Activated CD4-positive, alpha-beta T cell treated with anti-CD3 and anti-CD28 coated beads, Interleukin-2, amount 10 ng/mL, durations not matched to agents 24 days and 14 days (primary cell): ENCODE measurements at regions of chr1 and their contacts with region 1.

Region 1: GRCh38 chr1:199009447-199009846 is 370.6 kb downstream of the PTPRC start:
- DNase-seq: peak; percentile 71
- H3K4me3 Mint-ChIP-seq: peak overlapping the region; percentile 50
- H3K27ac Mint-ChIP-seq: peak overlapping the region; percentile 62
- H3K4me1 Mint-ChIP-seq: peaks cover 43% of the 10 kb centered on the region
- H3K27me3 Mint-ChIP-seq: peaks cover 2% of the 10 kb centered on the region

Region 2: GRCh38 chr1:198858033-198858432 is 151.4 kb before region 1 on chr1:
- intact Hi-C with region 1: no loop called
- DNase-seq: no peak
- H3K4me3 Mint-ChIP-seq: no peak overlapping the region
- H3K27ac Mint-ChIP-seq: no peak overlapping the region
- H3K4me1 Mint-ChIP-seq: peaks cover 10% of the 10 kb centered on the region
- H3K27me3 Mint-ChIP-seq: no peaks in the 10 kb centered on the region

Region 3: GRCh38 chr1:198970912-198971311 is 38.5 kb before region 1 on chr1:
- intact Hi-C with region 1: no loop called
- DNase-seq: no peak
- H3K4me3 Mint-ChIP-seq: no peak overlapping the region
- H3K27ac Mint-ChIP-seq: no peak overlapping the region
- H3K4me1 Mint-ChIP-seq: peaks cover 25% of the 10 kb centered on the region
- H3K27me3 Mint-ChIP-seq: no peaks in the 10 kb centered on the region

Region 4: DNA sequence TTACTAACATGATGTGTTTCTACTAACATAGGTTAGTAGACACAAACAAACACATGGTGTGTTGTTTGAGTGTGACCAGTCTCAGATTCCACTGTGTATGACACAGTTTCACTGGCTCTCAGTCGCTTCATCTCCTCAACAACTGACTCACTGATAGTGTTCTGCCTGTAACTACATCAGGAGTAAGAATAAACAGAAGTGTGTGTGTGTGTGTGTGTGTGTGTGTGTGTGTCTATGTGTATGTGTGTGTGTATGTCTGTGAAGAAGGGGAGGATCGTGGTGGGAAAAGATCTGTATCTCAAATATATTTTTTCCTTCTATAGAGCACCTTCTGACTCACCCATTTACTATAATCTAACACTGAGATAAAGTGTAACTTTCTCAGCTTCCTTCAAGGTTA is 20.4 kb after region 1 on chr1:
- intact Hi-C with region 1: loop called (anchors 2 kb)
- DNase-seq: no peak
- H3K4me3 Mint-ChIP-seq: peak overlapping the region; percentile 12
- H3K27ac Mint-ChIP-seq: peak overlapping the region; percentile 57
- H3K4me1 Mint-ChIP-seq: peaks cover 36% of the 10 kb centered on the region
- H3K27me3 Mint-ChIP-seq: no peaks in the 10 kb centered on the region

Region 5: DNA sequence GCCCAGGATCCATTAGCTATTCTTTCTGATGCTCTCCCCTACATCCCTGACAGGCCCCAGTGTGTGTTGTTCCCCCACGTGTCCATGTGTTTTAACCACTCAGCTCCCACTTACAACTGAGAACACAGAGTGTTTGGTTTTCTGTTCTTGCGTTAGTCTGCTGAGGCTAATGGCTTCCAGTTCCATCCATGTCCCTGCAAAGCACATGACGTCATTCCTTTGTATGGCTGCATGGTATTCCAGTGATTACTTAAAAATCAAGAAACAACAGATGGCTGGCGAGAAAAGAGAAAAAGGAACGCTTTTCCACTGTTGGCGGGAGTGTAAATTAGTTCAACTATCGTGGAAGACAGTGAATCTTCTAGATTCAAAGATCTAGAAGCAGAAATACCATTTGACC is 185.4 kb after region 1 on chr1:
- intact Hi-C with region 1: no loop called
- DNase-seq: no peak
- H3K4me3 Mint-ChIP-seq: no peak overlapping the region
- H3K27ac Mint-ChIP-seq: no peak overlapping the region
- H3K4me1 Mint-ChIP-seq: no peaks in the 10 kb centered on the region
- H3K27me3 Mint-ChIP-seq: peaks cover 10% of the 10 kb centered on the region

Region 6: DNA sequence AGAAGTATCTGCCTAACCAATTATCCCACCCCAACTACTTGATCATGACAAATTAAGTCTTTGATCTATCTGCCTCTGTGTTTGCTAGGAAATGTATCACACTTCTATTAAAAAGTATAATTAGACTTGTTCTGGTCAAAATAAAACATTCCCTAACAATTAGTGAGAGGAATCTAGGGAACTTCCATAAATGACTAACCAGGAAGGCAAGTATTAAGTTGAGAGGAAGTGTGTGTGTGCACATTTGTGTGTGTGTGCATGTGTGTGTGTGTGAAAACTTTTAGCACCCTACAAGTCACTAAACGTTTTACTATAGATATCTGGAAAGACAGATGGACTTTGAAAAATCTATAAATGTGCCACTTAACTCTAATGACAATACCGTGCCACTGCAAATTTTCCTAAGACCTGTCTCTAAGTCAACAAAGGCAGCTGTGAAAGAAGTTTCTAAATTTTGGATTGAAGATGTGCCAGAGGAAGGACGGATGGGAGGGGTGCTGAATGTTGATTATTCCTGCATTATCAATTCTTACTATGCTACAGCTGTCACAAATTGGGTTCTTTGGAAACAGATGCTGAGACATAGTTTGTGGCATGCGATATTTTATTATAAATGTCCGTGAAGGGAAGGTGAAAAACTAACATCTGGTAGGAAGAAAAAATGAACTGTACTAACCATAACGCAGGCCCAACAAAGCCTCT is 196.4 kb after region 1 on chr1:
- intact Hi-C with region 1: no loop called
- DNase-seq: no peak
- H3K4me3 Mint-ChIP-seq: no peak overlapping the region
- H3K27ac Mint-ChIP-seq: no peak overlapping the region
- H3K4me1 Mint-ChIP-seq: no peaks in the 10 kb centered on the region
- H3K27me3 Mint-ChIP-seq: peaks cover 8% of the 10 kb centered on the region